ENCODE measurements at regions of chr17 and their contacts with region 1.

Region 1: GRCh38 chr17:41264599-41264998 is 579 bp upstream of the KRTAP9-6 start:
- DNase-seq: no peak
- ATAC-seq: no peak
- H3K4me3 ChIP-seq: no peak overlapping the region
- H3K27ac ChIP-seq: no peak overlapping the region
- H3K4me1 ChIP-seq: no peaks in the 10 kb centered on the region
- H3K27me3 ChIP-seq: peaks cover 0 to 15% (median 2%) of the 10 kb centered on the region in 9 donors
- CTCF ChIP-seq: no peak
- POLR2A ChIP-seq: no peak

Region 2: DNA sequence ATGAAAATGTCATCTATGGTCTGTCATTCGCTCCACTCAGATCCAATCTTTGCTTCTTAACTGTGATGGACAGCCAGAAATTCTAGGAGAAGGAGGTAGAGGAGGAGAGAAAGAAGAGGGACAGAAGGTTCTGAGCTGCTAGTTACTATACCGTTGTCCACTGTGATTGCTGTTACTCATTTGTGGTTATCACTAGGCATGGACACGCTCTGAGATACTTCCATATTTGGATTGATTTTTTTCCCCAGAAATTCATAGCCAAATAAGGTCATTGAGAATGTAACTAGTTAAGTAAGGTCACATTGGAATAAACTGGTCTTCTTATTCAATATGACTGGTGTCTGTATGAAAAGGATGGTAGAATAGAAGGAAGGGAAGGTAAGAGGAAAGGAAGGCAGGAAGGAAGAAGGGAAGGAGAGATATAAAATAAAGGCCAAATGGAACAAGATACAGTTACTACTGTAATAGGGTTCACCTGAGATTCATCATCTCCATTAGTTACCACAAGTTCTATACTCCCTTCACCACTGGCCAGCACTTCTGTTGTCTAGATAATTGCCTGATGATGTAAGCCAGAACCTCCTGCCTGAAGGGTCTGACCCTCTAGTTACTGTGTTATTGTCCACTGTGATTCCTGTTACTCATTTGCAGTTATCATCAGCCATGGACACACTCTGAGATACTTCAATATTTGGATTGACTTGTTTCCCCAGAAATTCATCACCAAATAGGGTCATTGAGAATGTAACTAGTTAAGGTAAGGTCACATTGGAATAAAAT is 13.8 kb after region 1 on chr17:
- intact Hi-C with region 1: loop called in 2 of 10 experiments (anchors 2 kb)
- DNase-seq: no peak
- ATAC-seq: no peak
- H3K4me3 ChIP-seq: no peak overlapping the region
- H3K27ac ChIP-seq: no peak overlapping the region
- H3K4me1 ChIP-seq: no peaks in the 10 kb centered on the region
- H3K27me3 ChIP-seq: peaks cover 0 to 22% (median 0%) of the 10 kb centered on the region in 9 donors
- CTCF ChIP-seq: no peak
- POLR2A ChIP-seq: no peak

Region 3: GRCh38 chr17:41284043-41284442 is 19.4 kb after region 1 on chr17:
- intact Hi-C with region 1: loop called in 1 of 10 experiments (anchors 2 kb)
- DNase-seq: no peak
- ATAC-seq: no peak
- H3K4me3 ChIP-seq: no peak overlapping the region
- H3K27ac ChIP-seq: no peak overlapping the region
- H3K4me1 ChIP-seq: no peaks in the 10 kb centered on the region
- H3K27me3 ChIP-seq: peaks cover 0 to 19% (median 0%) of the 10 kb centered on the region in 9 donors
- CTCF ChIP-seq: no peak
- POLR2A ChIP-seq: no peak

Region 4: DNA sequence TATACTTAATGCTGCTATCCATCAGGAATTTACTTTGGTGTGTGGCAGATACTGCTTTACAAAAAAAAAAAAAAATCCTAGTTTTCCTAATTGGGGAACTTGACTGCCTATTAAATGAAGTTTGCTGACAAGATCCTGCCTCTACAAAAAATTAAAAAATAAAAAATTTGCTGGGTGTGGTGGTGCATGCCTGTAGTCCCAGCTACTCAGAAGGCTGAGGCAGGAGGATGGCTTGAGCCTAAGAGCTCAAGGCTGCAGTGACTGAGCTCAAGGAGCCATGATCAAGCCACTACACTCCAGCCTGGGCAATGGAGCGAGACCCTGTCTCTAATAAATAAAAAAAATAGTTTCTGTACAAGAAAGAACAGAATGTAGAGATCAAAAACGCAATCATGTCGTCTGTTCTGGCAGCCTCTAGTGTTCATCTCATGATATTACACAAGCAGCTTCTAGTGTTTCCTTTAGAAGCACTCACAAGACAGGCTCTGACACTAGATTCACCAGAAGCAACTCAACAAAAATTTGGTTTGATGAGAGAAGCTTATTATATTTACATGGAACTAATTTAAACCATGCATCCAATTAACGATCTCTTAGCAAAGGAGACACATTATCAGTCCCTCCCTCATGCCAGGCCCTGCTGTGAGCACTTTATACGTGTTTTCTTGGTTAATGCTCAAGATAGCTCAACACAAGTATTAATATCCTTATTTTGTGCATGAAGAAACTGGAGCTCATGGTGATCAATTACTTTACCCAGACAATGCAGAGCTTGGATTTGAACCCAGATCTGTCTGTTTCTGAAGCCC is 57.7 kb after region 1 on chr17:
- intact Hi-C with region 1: loop called in 1 of 10 experiments (anchors 10 kb)
- DNase-seq: no peak
- ATAC-seq: peak in 1 of 4 donors; percentile 41
- H3K4me3 ChIP-seq: no peak overlapping the region
- H3K27ac ChIP-seq: no peak overlapping the region
- H3K4me1 ChIP-seq: no peaks in the 10 kb centered on the region
- H3K27me3 ChIP-seq: no peaks in the 10 kb centered on the region
- CTCF ChIP-seq: peak; percentile 35 to 73 (median 59)
- POLR2A ChIP-seq: no peak